ENCODE measurements at regions of chr3 and their contacts with region 1.

Region 1: DNA sequence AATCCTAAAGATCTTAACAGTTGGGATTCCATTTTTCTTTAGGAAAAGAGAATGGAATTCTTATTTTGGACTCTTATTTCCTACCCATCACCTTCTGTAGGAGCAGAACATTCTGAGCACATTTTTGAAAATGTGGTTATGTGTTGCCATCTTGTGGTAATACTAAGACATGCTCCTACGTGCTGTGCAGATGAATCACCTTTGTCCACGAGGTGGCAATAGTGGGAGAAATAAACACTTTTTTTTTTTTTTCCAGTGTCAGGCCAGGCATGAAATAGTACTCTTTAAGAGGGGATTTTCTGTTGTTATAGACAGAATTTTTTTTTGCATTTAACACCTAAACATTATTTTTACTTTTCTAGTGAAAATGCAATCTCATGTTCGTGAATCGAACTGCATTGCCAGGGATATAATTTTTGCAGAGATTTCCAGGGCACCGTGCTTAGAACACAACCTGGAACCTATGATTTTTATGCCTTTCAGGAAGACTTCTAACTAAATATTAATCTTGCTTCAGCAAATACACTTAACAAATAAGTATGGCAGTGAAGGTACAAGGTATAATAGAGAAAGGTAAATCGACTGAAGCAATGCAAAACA is 196.6 kb downstream of the GAP43 start:
- DNase-seq: peak; percentile 93
- ATAC-seq: peak; percentile 59
- H3K4me3 ChIP-seq: no peak overlapping the region
- H3K27ac ChIP-seq: no peak overlapping the region
- H3K4me1 ChIP-seq: peaks cover 24% of the 10 kb centered on the region
- H3K27me3 ChIP-seq: no peaks in the 10 kb centered on the region
- CTCF ChIP-seq: peak; percentile 100

Region 2: DNA sequence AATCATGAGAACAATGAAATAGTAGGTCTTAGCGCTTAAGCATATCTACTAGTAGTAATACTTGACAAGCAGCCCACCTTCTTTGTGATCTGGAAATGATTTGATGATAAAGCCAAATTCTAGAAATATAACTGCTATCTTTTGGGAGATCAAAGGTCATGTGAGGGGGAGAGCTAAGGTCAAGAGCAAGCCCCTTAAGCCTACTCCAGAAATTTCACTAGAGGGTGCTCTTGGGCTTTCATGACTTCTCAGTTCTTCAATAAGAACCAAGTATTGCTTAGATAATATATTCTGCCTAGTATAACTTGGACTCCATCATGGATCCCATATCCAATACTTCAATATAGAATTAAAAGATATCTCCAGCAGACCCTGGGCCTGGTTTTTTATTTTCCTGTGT is 992.4 kb before region 1 on chr3:
- CTCF ChIA-PET with region 1: no interaction called
- POLR2A ChIA-PET with region 1: no interaction called
- intact Hi-C with region 1: loop called (anchors 10 kb)
- DNase-seq: peak; percentile 51
- ATAC-seq: peak; percentile 86
- H3K4me3 ChIP-seq: no peak overlapping the region
- H3K27ac ChIP-seq: no peak overlapping the region
- H3K4me1 ChIP-seq: no peaks in the 10 kb centered on the region
- H3K27me3 ChIP-seq: no peaks in the 10 kb centered on the region
- CTCF ChIP-seq: peak; percentile 68

Region 3: DNA sequence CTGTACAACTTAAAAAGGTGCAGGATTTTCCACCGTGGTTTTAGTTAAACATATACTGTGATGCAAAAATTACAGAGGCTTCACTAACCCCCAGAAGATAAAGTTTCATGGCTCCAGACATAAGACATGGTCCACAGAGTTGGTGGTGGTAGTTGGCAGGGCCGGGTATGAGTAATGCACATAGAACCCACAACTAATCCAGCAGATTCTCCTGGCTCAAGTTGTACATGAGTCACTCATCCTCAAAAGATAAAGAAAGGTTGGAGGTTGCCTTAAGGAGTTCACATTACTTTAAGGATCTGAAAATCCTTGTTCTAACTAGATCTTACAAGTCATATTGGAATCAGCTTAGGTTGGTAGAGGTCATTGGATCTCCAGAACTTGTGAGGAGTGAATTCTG is 574.4 kb before region 1 on chr3:
- CTCF ChIA-PET with region 1: no interaction called
- POLR2A ChIA-PET with region 1: no interaction called
- intact Hi-C with region 1: loop called (anchors 5 kb)
- DNase-seq: peak; percentile 93
- ATAC-seq: peak; percentile 97
- H3K4me3 ChIP-seq: no peak overlapping the region; the same call in 1 of the 2 replicates
- H3K27ac ChIP-seq: peak overlapping the region; percentile 95
- H3K4me1 ChIP-seq: peaks cover 38% of the 10 kb centered on the region
- H3K27me3 ChIP-seq: no peaks in the 10 kb centered on the region
- CTCF ChIP-seq: no peak

Region 4: GRCh38 chr3:115708540-115708939 is 111.3 kb before region 1 on chr3:
- CTCF ChIA-PET with region 1: no interaction called
- POLR2A ChIA-PET with region 1: no interaction called
- intact Hi-C with region 1: no loop called
- DNase-seq: no peak
- ATAC-seq: no peak
- H3K4me3 ChIP-seq: no peak overlapping the region
- H3K27ac ChIP-seq: no peak overlapping the region
- H3K4me1 ChIP-seq: no peaks in the 10 kb centered on the region
- H3K27me3 ChIP-seq: no peaks in the 10 kb centered on the region; the same call in 1 of the 2 replicates
- CTCF ChIP-seq: no peak

Region 5: GRCh38 chr3:115783938-115784738 is 35.7 kb before region 1 on chr3:
- CTCF ChIA-PET with region 1: interaction called, 18 read pairs
- POLR2A ChIA-PET with region 1: interaction called, 21 read pairs
- intact Hi-C with region 1: no loop called
- DNase-seq: peak; percentile 90
- ATAC-seq: peak; percentile 80
- H3K4me3 ChIP-seq: peak overlapping the region; percentile 65
- H3K27ac ChIP-seq: peak overlapping the region; percentile 96
- H3K4me1 ChIP-seq: peaks cover 34% of the 10 kb centered on the region
- H3K27me3 ChIP-seq: no peaks in the 10 kb centered on the region
- CTCF ChIP-seq: peak; percentile 96

Region 6: DNA sequence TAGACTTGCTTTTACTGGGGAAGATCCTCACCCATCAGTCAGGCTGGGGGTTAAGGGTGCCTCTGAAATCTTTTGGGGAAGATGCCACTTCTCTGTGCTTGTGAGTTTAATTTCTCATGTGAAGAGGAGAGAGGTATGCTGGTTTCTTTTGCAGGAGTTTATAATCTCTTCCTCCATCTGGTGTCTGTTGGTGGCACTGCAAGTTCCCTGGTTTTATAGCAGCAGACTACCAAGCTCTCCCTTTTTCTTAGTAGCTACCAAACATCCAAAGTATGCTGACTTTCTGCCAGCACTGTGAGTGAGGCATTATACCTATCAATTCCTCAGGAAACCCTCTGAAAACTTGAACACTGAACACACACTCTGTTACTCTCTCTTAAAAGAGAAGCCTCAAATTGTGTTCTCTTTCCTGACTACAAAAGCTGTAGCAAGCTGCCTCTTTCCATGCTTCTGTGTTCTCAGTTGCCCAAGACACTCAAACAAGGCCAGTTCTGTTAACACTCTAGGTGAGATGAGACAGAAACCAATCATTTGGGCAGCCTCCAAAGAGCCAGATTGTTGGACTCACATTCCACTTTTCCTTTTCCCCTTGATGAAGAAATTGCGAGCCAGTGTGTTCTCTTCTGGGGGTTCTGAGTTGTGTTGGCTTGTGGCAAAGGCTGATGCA is 102.9 kb after region 1 on chr3:
- CTCF ChIA-PET with region 1: no interaction called
- POLR2A ChIA-PET with region 1: no interaction called
- intact Hi-C with region 1: loop called (anchors 2 kb)
- DNase-seq: peak; percentile 53
- ATAC-seq: peak; percentile 86
- H3K4me3 ChIP-seq: no peak overlapping the region
- H3K27ac ChIP-seq: no peak overlapping the region
- H3K4me1 ChIP-seq: no peaks in the 10 kb centered on the region
- H3K27me3 ChIP-seq: no peaks in the 10 kb centered on the region
- CTCF ChIP-seq: peak; percentile 71

Region 7: DNA sequence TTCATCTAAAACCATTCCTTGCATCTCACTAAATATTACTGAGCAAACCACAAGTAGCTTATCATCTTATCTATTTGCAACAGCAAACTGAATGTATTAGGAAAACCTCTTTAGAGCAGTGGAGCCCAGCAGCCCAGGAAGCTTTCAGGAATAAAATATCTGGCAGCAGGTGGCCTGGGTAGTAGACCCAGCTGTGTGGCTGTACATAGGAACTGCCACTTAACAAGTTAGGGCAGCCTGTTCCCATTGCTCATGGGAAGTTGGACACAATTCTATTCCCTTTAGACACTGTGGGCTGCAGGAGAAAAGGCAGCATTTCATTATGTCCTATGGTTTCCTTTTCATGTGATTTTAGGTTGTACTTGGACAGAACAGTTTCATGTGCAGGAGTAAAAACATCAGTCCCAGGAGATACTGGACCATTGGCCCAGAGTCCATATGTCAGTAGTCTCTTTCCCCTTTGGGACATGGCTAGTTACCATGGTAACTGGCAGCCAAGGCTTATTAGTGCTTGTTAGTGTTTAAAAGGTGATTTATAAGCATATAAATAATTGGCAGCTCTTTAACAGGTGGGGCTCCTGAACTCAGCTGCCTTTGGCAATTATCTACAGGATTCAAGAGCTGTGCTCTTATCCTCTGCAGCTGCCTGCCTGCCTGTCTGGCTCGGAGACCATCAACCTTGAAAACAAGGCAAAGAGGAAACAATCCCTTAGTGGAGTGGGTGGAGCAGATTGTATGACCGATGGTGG is 654.3 kb after region 1 on chr3:
- CTCF ChIA-PET with region 1: no interaction called
- POLR2A ChIA-PET with region 1: no interaction called
- intact Hi-C with region 1: no loop called
- DNase-seq: no peak
- ATAC-seq: no peak
- H3K4me3 ChIP-seq: no peak overlapping the region
- H3K27ac ChIP-seq: no peak overlapping the region
- H3K4me1 ChIP-seq: no peaks in the 10 kb centered on the region
- H3K27me3 ChIP-seq: no peaks in the 10 kb centered on the region
- CTCF ChIP-seq: no peak

Region 8: DNA sequence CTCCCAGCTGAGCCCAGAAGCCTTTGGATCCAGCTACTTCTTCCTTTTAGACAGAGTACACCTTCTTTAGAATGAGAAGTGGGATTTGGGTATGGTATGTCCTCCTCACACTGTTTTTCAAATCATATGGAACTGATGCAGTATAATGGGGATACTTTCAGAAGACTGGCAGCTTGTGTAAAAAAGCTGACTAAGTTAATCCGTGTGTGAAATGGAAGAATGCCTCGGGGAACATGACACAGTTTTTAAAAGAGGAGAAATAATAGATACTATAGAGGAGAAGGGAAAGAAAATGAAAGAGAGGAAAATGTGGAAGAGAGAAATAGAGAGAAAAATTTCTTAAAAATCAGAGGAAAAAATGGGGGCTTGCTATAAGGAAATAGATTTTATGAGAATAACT is 937.4 kb after region 1 on chr3:
- CTCF ChIA-PET with region 1: no interaction called
- POLR2A ChIA-PET with region 1: no interaction called
- intact Hi-C with region 1: loop called (anchors 2 kb)
- DNase-seq: no peak
- ATAC-seq: no peak
- H3K4me3 ChIP-seq: no peak overlapping the region
- H3K27ac ChIP-seq: no peak overlapping the region
- H3K4me1 ChIP-seq: no peaks in the 10 kb centered on the region
- H3K27me3 ChIP-seq: no peaks in the 10 kb centered on the region; the same call in 1 of the 2 replicates
- CTCF ChIP-seq: no peak

Measured in PC-3 (cell line).